ENCODE measurements at regions of chr5 and their contacts with region 1.

Region 1: DNA sequence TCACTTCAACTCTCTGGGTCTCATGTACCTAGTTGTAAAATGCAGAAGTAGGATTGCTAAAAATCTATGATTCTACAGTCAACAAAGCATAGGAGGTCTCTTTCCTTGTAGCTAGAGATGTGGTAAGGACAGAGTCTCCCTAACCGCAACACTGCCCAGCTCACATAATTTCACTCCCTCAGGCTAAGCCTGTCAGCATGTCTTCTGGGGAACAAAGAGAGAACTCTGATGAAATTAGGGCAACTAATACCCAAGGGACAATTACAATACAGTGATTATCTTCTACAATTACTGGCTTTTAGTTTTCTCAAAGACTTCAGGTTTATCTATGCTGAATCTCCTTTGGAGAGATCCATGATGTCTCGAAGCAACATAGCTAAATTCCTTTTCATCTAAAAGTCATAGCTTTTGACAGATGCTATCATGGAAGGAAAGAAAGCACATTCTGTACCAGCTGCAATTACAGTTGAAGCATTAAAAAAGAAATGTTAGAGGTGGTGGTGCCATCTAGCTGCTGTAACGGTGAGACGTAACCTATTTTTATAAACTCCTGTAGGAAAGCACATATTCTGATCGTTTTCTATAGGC is 141.1 kb upstream of the TARS1 start:
- DNase-seq: no peak
- ATAC-seq: peak; percentile 55 to 94 (median 72)
- H3K4me3 ChIP-seq: no peak overlapping the region
- H3K27ac ChIP-seq: peak overlapping the region; percentile 10
- H3K4me1 ChIP-seq: peaks cover 13% of the 10 kb centered on the region
- H3K27me3 ChIP-seq: no peaks in the 10 kb centered on the region
- CTCF ChIP-seq: peak; percentile 58

Region 2: DNA sequence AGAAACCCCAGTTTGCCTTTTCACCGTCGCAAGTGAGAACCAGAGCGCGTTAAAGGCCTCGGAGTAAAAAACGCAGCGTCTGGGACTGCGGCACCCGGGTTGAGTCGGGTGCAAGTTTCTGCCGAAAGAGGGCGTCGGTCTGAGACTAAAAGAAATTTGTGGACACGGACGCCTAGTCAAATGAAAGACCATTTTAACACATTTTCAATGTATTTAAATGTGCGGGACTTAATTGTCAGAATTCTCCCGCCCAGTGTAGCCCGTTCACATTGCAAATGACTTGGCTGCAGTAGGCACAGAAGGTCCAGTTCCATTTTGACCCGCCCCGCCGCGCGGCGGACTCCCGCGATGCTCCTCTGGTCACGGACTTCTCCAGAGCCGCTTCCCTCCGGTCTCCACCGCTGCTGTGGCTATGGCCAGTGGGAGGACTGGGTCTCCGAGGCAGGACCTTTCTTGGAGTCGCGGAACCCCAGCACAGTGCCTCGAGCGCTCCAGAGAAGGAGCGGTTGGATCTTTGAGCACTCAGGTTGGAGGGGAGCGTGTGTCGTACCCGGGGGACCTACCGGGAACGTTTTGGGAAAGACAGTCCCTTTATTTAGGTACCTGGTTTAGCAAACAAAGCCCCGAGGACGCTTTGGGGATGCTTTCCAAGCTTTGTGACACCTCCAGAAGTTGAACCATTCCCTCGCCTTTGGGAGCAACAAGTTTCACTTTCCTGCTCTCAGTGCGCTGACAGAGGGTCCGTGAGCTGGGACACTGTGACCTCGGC is 589.8 kb before region 1 on chr5:
- intact Hi-C with region 1: loop called in 1 of 2 experiments (anchors 5 kb)
- DNase-seq: peak; percentile 61 to 77
- ATAC-seq: peak; percentile 36 to 78 (median 56)
- H3K4me3 ChIP-seq: peak overlapping the region; percentile 80
- H3K27ac ChIP-seq: peak overlapping the region; percentile 63
- H3K4me1 ChIP-seq: peaks cover 5% of the 10 kb centered on the region
- H3K27me3 ChIP-seq: peaks cover 0 to 30% (median 20%) of the 10 kb centered on the region in 3 donors
- CTCF ChIP-seq: peak; percentile 63

Region 3: DNA sequence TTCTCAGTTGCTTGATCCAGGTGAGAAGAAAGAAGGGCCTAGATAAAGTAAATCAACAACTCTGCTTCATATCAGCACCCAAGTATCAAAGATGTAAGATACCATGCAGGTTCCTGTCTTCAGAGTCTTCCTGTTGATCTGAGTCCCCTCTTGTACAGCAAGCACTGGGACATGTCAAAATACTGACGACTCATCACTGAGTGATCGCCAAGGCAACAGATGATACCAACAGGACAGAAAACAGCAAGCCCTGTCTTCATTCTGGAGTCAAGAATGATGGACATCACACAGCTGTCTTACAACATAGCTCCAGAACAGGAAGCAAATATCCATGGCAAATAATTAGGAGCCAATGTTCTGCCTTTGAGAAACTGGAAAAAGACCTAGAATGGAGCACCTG is 224.8 kb after region 1 on chr5:
- intact Hi-C with region 1: no loop called
- DNase-seq: no peak
- ATAC-seq: no peak
- H3K4me3 ChIP-seq: no peak overlapping the region
- H3K27ac ChIP-seq: no peak overlapping the region
- H3K4me1 ChIP-seq: no peaks in the 10 kb centered on the region
- H3K27me3 ChIP-seq: no peaks in the 10 kb centered on the region
- CTCF ChIP-seq: no peak

Measured in psoas muscle (tissue), 8 donors.